WTC11 (cell line): ENCODE measurements at regions of chr5 and their contacts with region 1.

Region 1: GRCh38 chr5:3602785-3603502 is 7.3 kb downstream of the IRX1 start:
- DNase-seq: peak; percentile 77
- ATAC-seq: peak; percentile 31
- H3K4me3 Mint-ChIP-seq: peak overlapping the region; percentile 69
- H3K27ac Mint-ChIP-seq: no peak overlapping the region
- H3K4me1 Mint-ChIP-seq: peaks cover 31% of the 10 kb centered on the region
- H3K27me3 Mint-ChIP-seq: peaks cover 99% of the 10 kb centered on the region
- CTCF ChIP-seq: peak; percentile 78

Region 2: GRCh38 chr5:3303777-3304176 is 299.2 kb before region 1 on chr5:
- CTCF ChIA-PET with region 1: no interaction called
- POLR2A ChIA-PET with region 1: no interaction called
- DNase-seq: no peak
- ATAC-seq: no peak
- H3K4me3 Mint-ChIP-seq: no peak overlapping the region
- H3K27ac Mint-ChIP-seq: no peak overlapping the region
- H3K4me1 Mint-ChIP-seq: peaks cover 15% of the 10 kb centered on the region
- H3K27me3 Mint-ChIP-seq: no peaks in the 10 kb centered on the region; the same call in 1 of the 2 replicates
- CTCF ChIP-seq: no peak

Region 3: DNA sequence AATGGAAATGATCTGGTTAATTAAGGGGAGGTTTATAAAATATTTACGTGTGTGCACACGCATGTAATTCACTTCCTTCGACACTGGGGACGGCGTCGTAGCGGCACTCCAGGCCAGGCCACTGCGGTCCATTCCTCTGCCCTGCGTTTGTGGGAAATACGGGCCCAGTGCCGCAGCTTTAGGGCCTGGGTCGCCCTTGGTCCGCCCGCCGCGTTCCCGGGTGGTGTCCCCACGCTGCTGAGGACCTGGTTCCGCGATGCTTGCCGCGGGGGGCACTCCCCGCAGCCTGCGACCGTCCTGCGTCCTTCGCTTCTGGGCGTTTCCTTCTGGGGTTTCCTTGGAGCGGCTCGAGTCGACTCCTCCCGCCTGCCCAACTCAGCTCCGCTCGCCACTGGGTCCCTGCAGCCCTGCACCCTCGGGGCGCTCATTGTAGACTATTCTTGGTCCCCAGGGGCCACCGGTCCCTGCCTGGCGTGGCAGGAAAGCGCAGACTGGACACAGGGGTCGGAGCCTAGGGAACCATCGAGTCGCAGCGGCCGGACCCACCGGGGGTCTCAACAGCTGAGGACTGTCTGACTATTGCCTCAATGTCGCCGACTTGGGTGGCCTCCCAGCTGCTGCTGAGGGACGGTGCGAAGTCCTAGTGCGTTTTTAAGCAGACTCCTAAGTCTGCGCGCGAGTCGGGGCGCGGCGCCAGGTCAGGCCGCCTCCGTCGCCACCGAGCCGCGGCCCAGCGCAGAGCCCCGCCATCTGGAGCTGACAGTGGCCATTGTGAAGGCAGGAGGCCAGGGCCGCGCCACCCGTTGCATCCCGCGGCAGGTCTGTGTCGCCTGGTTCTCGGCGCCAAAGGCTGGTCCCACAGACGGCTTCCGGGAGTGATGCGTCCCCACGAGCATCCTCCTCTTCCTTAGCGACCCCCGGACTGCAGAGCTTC is 11.7 kb before region 1 on chr5:
- CTCF ChIA-PET with region 1: interaction called, 25 read pairs
- POLR2A ChIA-PET with region 1: interaction called, 4 read pairs
- DNase-seq: peak; percentile 26
- ATAC-seq: no peak
- H3K4me3 Mint-ChIP-seq: peak overlapping the region; percentile 63
- H3K27ac Mint-ChIP-seq: no peak overlapping the region
- H3K4me1 Mint-ChIP-seq: peaks cover 31% of the 10 kb centered on the region
- H3K27me3 Mint-ChIP-seq: peaks cover 91% of the 10 kb centered on the region
- CTCF ChIP-seq: no peak

Region 4: DNA sequence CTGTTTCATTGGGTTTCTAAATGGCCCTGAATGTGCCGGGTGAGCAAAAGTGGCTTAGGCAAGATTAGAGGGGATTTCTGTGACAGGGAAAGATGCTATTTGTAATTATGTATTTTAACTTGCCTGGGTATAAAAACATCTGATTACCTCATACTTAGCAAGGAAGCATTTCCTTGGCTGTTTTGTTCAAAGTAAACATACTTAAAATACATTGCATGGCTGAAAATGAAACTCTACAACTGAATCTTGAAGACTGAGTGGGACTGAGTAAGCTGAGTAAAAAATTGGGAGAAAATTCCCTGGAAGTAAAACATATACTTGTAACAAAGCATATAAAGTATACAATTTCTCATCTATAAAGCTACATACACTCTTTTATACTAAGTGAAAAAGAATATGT is 190.2 kb after region 1 on chr5:
- CTCF ChIA-PET with region 1: no interaction called
- POLR2A ChIA-PET with region 1: no interaction called
- DNase-seq: no peak
- ATAC-seq: no peak
- H3K4me3 Mint-ChIP-seq: no peak overlapping the region
- H3K27ac Mint-ChIP-seq: no peak overlapping the region
- H3K4me1 Mint-ChIP-seq: peaks cover 32% of the 10 kb centered on the region
- H3K27me3 Mint-ChIP-seq: peaks cover 4% of the 10 kb centered on the region
- CTCF ChIP-seq: no peak